Activated T-helper 1 cell treated with anti-CD3 and anti-CD28 coated beads, Interleukin-12 subunit alpha, Interleukin-12 subunit beta, Interleukin-2, Interleukin-4 antibody, amounts not matched to agents 30 ng/mL and 10 ng/mL and 1 ng/mL, durations not matched to agents 14 hours and 24 hours and 36 hours (primary cell): ENCODE measurements at regions of chr7 and their contacts with region 1.

Region 1: GRCh38 chr7:17298207-17298839 is at the start of gene AHR:
- DNase-seq: peak; percentile 62
- H3K4me3 Mint-ChIP-seq: peak within 1 kb of the TSS; percentile 92
- H3K27ac Mint-ChIP-seq: peak within 1 kb of the TSS; percentile 94
- H3K4me1 Mint-ChIP-seq: peaks cover 15% of the 10 kb centered on the region
- H3K27me3 Mint-ChIP-seq: no peaks in the 10 kb centered on the region
- total RNA-seq, gene AHR: 25.3 and 29.1 TPM in 2 replicates

Region 2: DNA sequence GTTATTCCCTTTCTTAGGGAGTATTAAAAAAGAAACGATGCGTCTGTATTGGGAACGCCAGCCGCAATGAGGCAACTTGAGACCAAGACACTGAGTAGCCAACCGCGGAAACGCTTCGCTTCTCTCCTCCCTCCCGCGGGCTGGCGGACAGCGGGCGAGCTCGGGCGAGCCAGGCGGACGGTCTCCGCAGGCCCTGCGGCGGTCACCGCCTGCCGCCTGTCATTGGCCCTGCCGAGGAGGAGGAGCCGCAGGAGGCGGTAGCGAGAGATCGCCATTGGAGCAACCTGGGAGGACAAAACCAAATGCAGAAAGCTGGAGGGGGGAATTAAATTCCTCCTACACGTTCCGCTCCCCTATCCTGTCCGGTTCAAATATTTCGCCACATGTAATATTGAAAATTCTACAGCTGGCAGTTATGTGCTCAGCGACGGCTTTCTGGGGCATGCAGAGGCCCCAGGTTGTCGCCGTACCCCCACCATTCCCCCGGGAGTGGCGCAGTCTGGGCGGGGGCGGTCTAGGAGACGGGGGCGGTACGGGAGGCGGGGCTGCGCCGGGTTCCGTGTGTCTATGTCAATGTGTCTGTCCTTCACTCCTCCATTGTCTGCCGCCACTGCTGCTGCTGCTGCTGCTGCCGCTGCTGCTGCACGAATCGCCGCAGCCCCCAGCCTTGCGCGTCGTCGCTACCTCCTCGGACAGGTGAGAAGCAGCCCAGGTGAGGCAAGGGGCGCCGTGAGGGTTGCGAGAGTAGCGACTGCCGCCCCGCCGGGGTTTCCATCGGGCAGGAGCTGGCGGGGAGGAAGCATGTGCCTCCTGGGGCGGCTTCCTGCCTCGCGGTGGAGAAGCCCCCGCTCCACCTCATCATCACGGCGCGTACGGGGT is 652.5 kb before region 1 on chr7 and contains the starts of genes ANKMY2 and BZW2:
- intact Hi-C with region 1: loop called (anchors 5 kb)
- DNase-seq: peak; percentile 93
- H3K4me3 Mint-ChIP-seq: peak within 1 kb of the TSS; percentile 98
- H3K27ac Mint-ChIP-seq: peak within 1 kb of the TSS; percentile 100
- H3K4me1 Mint-ChIP-seq: peaks cover 60% of the 10 kb centered on the region
- H3K27me3 Mint-ChIP-seq: no peaks in the 10 kb centered on the region
- total RNA-seq, gene ANKMY2: 6.9 and 8.4 TPM in 2 replicates
- total RNA-seq, gene BZW2: 94.3 and 101 TPM in 2 replicates

Region 3: DNA sequence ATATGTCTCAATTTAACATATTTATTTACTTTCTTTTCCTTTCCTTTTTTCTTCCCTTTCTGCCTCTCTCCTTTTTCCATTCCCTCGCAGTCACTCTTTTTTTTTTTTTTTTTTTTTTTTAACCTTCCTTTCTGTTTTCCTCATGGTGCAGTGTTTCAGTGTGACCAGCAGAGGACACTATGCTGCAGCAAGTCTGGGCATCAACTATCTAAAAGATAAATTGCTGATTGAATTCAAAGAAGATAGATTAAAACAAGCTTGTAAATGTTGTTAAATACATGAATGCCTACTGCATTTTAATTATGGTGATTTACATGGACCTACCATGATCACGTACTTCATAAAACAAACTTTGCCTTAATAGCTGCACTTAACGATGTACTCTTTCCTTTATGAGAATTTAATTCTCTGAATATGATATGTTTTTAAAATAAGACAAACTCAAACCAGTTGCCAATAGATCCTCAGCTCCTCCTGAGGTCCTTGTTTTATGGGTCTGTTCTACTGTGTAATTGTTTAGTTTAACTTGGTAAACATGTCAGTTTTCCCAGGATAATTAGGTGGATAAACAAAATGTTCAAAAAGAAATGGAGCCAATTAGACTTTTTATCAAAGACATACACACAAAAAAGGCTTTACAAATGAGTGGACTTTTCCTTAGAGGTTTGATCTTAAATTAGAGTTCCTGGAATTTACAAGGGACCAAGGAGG is 315.5 kb before region 1 on chr7:
- intact Hi-C with region 1: loop called (anchors 1 kb)
- DNase-seq: no peak
- H3K4me3 Mint-ChIP-seq: no peak overlapping the region
- H3K27ac Mint-ChIP-seq: no peak overlapping the region
- H3K4me1 Mint-ChIP-seq: peaks cover 7% of the 10 kb centered on the region
- H3K27me3 Mint-ChIP-seq: peaks cover 18% of the 10 kb centered on the region

Region 4: GRCh38 chr7:17063045-17063383 is 235.3 kb before region 1 on chr7:
- intact Hi-C with region 1: loop called (anchors 5 kb)
- DNase-seq: no peak
- H3K4me3 Mint-ChIP-seq: no peak overlapping the region
- H3K27ac Mint-ChIP-seq: no peak overlapping the region
- H3K4me1 Mint-ChIP-seq: peaks cover 17% of the 10 kb centered on the region
- H3K27me3 Mint-ChIP-seq: no peaks in the 10 kb centered on the region

Region 5: DNA sequence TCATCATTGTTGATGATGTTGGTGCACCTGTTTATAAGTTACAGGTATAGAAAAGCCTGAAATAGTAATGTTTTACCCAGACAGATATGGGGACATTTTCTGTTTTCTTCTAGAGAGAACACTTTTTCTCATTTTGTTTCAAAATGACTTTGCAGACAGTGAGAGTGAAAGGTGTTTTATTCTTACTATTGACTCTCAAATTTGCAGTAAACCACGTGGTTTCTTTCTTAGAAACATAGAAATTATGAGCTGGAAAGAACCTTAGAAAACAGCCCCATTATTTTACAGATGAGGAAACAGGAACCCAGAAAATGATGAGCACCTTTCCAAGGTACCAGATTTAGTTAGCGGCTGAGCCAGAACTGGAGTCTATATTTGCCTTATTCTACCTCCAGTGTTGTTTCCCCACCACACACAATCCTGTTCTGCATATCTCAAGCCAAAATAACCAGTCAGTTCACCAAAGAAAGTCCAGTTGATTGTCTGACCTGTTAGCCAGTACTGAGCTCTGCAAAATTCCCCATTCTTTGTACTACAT is 138.8 kb before region 1 on chr7:
- intact Hi-C with region 1: loop called (anchors 1 kb)
- DNase-seq: no peak
- H3K4me3 Mint-ChIP-seq: no peak overlapping the region
- H3K27ac Mint-ChIP-seq: peak overlapping the region; percentile 55
- H3K4me1 Mint-ChIP-seq: peaks cover 30% of the 10 kb centered on the region
- H3K27me3 Mint-ChIP-seq: peaks cover 10% of the 10 kb centered on the region

Region 6: GRCh38 chr7:17402628-17403278 is 104.4 kb after region 1 on chr7:
- intact Hi-C with region 1: loop called (anchors 5 kb)
- DNase-seq: no peak
- H3K4me3 Mint-ChIP-seq: peak overlapping the region; percentile 13
- H3K27ac Mint-ChIP-seq: peak overlapping the region; percentile 32
- H3K4me1 Mint-ChIP-seq: peaks cover 27% of the 10 kb centered on the region
- H3K27me3 Mint-ChIP-seq: peaks cover under 1% of the 10 kb centered on the region

Region 7: GRCh38 chr7:17608114-17608833 is 310.0 kb after region 1 on chr7:
- intact Hi-C with region 1: no loop called
- DNase-seq: no peak
- H3K4me3 Mint-ChIP-seq: no peak overlapping the region
- H3K27ac Mint-ChIP-seq: no peak overlapping the region
- H3K4me1 Mint-ChIP-seq: no peaks in the 10 kb centered on the region
- H3K27me3 Mint-ChIP-seq: no peaks in the 10 kb centered on the region